ENCODE measurements at regions of chr1 and their contacts with region 1.

Region 1: GRCh38 chr1:156456622-156457465 is 43.7 kb downstream of the MEF2D start:
- DNase-seq: peak; percentile 93 to 99 (median 95)

Region 2: GRCh38 chr1:156104065-156104810 is 352.6 kb before region 1 on chr1:
- intact Hi-C with region 1: no loop called
- DNase-seq: peak in 1 of 10 donors; percentile 85

Region 3: GRCh38 chr1:156435545-156436141 is 21.2 kb before region 1 on chr1:
- intact Hi-C with region 1: no loop called
- DNase-seq: peak in 2 of 10 donors; percentile 88 to 89

Region 4: GRCh38 chr1:156591432-156592157 is 134.8 kb after region 1 on chr1 and contains the start of gene NAXE:
- intact Hi-C with region 1: loop called (anchors 5 kb)
- DNase-seq: peak; percentile 66 to 97 (median 78)

Region 5: GRCh38 chr1:156608036-156608674 is 151.3 kb after region 1 on chr1:
- intact Hi-C with region 1: loop called (anchors 5 kb)
- DNase-seq: peak in 3 of 10 donors; percentile 52 to 92 (median 61)

Measured in posterior cingulate gyrus (tissue), 11 donors.